CD8-positive, alpha-beta T cell (primary cell): ENCODE measurements at regions of chr3 and their contacts with region 1.

Region 1: DNA sequence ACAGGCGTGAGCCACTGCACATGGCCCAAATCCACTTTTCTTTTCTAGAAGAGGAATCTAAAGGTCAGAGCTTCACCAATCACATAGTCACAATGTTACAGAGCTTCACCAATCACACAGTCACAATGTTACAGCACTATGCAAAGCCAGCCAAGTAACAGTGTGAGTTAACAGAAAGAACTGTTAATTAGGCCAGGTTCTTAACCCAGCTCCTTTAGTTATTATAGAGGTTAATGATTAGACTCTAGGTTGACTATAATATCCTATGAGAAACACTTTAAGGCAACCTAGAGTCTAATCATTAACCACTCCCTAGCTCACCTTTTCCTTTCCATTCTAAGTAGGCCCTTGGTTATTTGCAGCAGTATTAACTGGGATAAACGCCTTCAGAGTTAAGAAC is 54.0 kb downstream of the TASOR start:
- DNase-seq: no peak
- ATAC-seq: no peak
- H3K4me3 ChIP-seq: no peak overlapping the region
- H3K4me3 Mint-ChIP-seq: no peak overlapping the region
- H3K27ac ChIP-seq: no peak overlapping the region
- H3K27ac Mint-ChIP-seq: peak overlapping the region; percentile 84
- H3K4me1 ChIP-seq: no peaks in the 10 kb centered on the region
- H3K4me1 Mint-ChIP-seq: peaks cover 12% of the 10 kb centered on the region
- H3K27me3 ChIP-seq: no peaks in the 10 kb centered on the region
- H3K27me3 Mint-ChIP-seq: no peaks in the 10 kb centered on the region
- CTCF ChIP-seq: no peak

Region 2: DNA sequence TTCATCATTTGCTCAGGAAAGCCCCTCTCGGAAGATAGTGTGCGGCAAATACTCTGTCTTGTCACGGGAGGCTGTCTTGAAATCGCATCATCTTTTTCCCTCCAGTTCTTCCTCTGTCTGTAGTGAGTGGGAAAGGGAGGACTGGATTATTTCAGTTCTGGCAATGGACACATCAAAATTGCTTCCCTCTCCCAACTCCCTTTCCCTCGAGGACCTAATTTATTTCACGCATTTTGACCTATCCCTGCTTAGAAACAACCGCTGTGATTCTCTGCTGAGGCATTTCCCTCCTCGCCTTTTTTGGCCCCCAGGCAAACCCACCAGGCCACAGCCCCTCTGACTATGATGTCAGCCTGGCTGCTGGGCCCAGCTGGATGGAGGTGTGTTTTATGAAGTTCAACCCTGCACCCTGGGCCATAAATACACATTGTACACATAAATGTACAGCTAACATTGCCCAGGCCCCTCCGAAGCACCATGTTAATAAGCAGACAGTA is 1562.4 kb before region 1 on chr3:
- CTCF ChIA-PET with region 1: no interaction called
- POLR2A ChIA-PET with region 1: no interaction called
- intact Hi-C with region 1: no loop called
- DNase-seq: no peak
- ATAC-seq: no peak
- H3K4me3 ChIP-seq: no peak overlapping the region
- H3K4me3 Mint-ChIP-seq: no peak overlapping the region
- H3K27ac ChIP-seq: no peak overlapping the region
- H3K27ac Mint-ChIP-seq: no peak overlapping the region
- H3K4me1 ChIP-seq: no peaks in the 10 kb centered on the region
- H3K4me1 Mint-ChIP-seq: no peaks in the 10 kb centered on the region
- H3K27me3 ChIP-seq: no peaks in the 10 kb centered on the region
- H3K27me3 Mint-ChIP-seq: peaks cover 2% of the 10 kb centered on the region
- CTCF ChIP-seq: no peak

Region 3: DNA sequence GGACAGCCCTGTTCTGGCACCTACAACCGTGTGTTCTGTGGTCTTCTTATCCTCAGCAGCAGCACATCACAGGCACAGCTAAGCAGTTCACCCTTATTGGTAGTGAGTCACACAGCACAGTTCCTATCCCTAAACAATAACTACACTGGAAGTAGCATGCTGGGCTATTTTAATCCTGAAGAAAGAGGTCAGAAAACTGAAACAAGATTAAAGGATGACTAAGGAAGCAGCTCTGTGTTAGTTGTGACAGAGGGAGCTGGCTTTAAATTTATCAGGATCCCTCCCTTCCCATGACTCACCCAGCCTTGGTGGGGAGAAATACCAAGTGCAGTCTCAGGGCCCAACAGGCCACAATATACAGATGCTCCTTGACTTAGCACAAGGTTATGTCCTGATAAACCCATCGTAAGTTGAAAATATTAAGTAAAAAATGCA is 305.0 kb before region 1 on chr3:
- CTCF ChIA-PET with region 1: no interaction called
- POLR2A ChIA-PET with region 1: no interaction called
- intact Hi-C with region 1: no loop called
- DNase-seq: no peak
- ATAC-seq: no peak
- H3K4me3 ChIP-seq: no peak overlapping the region
- H3K4me3 Mint-ChIP-seq: no peak overlapping the region
- H3K27ac ChIP-seq: no peak overlapping the region
- H3K27ac Mint-ChIP-seq: no peak overlapping the region
- H3K4me1 ChIP-seq: no peaks in the 10 kb centered on the region
- H3K4me1 Mint-ChIP-seq: no peaks in the 10 kb centered on the region
- H3K27me3 ChIP-seq: no peaks in the 10 kb centered on the region
- H3K27me3 Mint-ChIP-seq: peaks cover 8% of the 10 kb centered on the region
- CTCF ChIP-seq: no peak

Region 4: DNA sequence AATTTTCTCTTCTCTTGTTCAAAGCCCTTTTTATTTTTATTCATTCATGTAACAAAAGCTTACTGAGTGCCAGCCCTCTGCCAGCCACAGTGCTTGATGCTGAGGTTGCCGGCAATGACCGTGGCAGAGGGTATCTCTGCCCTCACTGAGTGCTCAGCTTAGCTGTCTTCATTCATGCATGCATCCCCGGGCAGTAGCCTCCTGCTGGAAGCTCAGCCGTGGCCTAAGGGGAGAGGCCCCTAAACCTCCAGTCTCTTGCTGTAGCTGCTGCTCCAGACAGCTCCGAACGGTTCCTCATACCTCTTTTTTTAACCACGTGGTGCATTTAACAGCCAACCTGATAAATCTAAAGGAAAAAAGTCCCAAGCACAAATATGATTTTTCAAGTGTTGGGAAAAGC is 106.7 kb before region 1 on chr3:
- CTCF ChIA-PET with region 1: no interaction called
- POLR2A ChIA-PET with region 1: no interaction called
- intact Hi-C with region 1: no loop called
- DNase-seq: no peak
- ATAC-seq: no peak
- H3K4me3 ChIP-seq: no peak overlapping the region
- H3K4me3 Mint-ChIP-seq: no peak overlapping the region
- H3K27ac ChIP-seq: no peak overlapping the region
- H3K27ac Mint-ChIP-seq: no peak overlapping the region
- H3K4me1 ChIP-seq: no peaks in the 10 kb centered on the region
- H3K4me1 Mint-ChIP-seq: no peaks in the 10 kb centered on the region
- H3K27me3 ChIP-seq: peaks cover 0 to 3% of the 10 kb centered on the region in 2 experiments
- H3K27me3 Mint-ChIP-seq: peaks cover 14% of the 10 kb centered on the region
- CTCF ChIP-seq: no peak

Region 5: DNA sequence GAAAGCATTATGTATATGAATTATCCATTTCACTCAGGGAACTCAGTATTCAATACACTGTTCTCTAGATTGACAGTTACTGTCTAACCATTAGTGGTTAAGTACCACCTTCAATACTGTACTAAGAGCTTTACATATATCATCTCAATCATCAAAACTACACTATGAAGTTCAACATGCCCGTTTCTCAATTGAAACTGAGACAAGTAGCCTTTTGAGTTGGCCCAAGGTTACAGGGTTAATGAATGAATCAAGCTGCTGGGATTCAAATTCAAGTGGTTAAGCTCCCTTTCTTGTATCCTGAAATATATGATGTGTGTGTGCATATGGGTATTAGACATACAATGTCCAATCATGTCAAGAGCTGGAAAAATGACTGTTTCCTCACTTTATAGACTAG is 48.2 kb after region 1 on chr3:
- CTCF ChIA-PET with region 1: no interaction called
- POLR2A ChIA-PET with region 1: no interaction called
- intact Hi-C with region 1: loop called in 1 of 2 experiments (anchors 10 kb)
- DNase-seq: no peak
- ATAC-seq: no peak
- H3K4me3 ChIP-seq: no peak overlapping the region
- H3K4me3 Mint-ChIP-seq: peak overlapping the region; percentile 8
- H3K27ac ChIP-seq: no peak overlapping the region
- H3K27ac Mint-ChIP-seq: peak overlapping the region; percentile 58
- H3K4me1 ChIP-seq: peaks cover 52% of the 10 kb centered on the region
- H3K4me1 Mint-ChIP-seq: peaks cover 62% of the 10 kb centered on the region
- H3K27me3 ChIP-seq: no peaks in the 10 kb centered on the region
- H3K27me3 Mint-ChIP-seq: no peaks in the 10 kb centered on the region
- CTCF ChIP-seq: no peak